Psoas muscle (tissue), 8 donors: ENCODE measurements at regions of chr15 and their contacts with region 1.

Region 1: DNA sequence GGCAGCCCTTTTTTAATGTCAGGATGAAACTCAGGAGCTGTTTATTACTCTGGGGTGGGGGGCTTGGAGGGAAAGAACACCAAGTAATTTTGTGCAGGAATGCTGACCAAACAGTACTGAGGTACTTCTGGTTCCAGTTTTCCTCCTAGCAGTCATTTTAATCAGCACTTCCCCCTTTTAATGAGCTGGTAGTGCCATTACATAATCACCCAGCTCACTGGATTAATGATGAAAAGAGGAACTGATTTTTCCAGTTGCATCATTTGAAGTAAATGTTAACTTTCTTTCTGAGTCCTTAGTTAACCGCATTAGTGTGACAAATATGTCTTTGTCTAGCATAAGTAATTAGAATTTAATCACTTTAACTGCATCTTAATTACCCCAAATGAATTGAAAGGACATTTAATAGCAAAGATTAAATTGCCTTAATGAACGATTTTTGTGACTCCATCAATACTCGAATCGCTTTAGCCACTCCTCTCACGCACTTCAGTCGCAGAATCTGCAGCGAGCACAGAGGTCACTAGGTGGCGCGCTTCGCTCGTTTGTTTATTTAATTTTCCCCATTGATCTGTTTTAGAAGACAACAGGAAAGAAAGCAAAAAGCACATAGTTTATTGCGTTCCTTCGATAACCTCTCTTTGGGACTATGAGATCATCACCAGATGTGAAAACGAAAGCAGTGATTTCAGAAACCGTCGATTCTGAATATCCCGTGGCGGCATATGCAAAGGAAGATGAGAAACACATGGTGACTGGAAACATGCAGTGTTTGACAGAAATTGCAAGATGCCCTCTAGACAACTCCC is 9.8 kb downstream of the ONECUT1 start:
- DNase-seq: peak; percentile 54 to 76
- ATAC-seq: peak in 3 of 4 donors; percentile 55 to 78 (median 57)
- H3K4me3 ChIP-seq: peak overlapping the region; percentile 0
- H3K27ac ChIP-seq: no peak overlapping the region
- H3K4me1 ChIP-seq: peaks cover 18% of the 10 kb centered on the region
- H3K27me3 ChIP-seq: peaks cover 6 to 91% (median 30%) of the 10 kb centered on the region in 3 donors
- CTCF ChIP-seq: peak; percentile 90

Region 2: DNA sequence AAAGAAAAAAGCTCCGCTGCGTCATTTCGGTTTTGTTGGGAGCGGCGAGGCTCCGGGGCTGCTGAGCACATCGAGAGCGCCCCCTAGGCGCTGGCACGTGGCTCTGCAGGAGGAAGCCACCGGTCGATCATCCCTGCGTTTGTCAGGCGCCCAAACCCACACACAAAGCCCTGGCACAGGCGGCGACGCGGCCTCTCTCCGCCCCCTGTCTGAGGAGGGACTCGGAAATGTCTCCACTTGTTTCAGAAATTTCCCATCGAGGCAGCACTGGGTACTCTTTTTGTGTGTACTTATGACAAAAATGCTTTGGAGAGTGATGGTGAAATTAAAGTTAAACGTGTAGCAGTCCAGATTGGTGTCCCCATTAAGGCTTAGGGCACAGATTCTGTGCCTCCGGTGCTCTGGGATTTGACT is 417.1 kb after region 1 on chr15:
- intact Hi-C with region 1: loop called (anchors 5 to 10 kb)
- DNase-seq: peak; percentile 41 to 73
- ATAC-seq: peak; percentile 72 to 92 (median 82)
- H3K4me3 ChIP-seq: peak overlapping the region; percentile 48
- H3K27ac ChIP-seq: no peak overlapping the region
- H3K4me1 ChIP-seq: peaks cover 3% of the 10 kb centered on the region
- H3K27me3 ChIP-seq: no peaks in the 10 kb centered on the region
- CTCF ChIP-seq: peak; percentile 85

Region 3: DNA sequence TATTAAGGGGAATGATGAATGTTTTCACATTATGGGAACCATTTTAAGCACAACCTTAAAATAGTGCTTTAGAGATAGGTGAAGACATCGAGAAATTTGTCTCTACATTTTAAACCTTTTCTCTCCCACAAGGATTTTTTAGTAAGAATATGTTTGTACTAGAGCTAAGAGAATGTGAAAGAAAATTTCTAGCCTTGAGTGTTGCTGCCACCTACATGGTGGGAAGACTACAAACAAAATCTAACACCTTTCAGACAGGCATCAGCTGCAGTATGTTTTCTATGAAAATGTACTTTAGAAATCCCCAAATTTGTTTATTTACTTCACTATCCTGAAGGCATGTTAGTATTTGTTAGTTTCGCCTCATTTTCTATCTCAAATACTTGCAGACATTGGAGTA is 731.7 kb after region 1 on chr15:
- intact Hi-C with region 1: loop called in 1 of 2 experiments (anchors 5 kb)
- DNase-seq: no peak
- ATAC-seq: no peak
- H3K4me3 ChIP-seq: no peak overlapping the region
- H3K27ac ChIP-seq: no peak overlapping the region
- H3K4me1 ChIP-seq: no peaks in the 10 kb centered on the region
- H3K27me3 ChIP-seq: no peaks in the 10 kb centered on the region
- CTCF ChIP-seq: no peak

Region 4: DNA sequence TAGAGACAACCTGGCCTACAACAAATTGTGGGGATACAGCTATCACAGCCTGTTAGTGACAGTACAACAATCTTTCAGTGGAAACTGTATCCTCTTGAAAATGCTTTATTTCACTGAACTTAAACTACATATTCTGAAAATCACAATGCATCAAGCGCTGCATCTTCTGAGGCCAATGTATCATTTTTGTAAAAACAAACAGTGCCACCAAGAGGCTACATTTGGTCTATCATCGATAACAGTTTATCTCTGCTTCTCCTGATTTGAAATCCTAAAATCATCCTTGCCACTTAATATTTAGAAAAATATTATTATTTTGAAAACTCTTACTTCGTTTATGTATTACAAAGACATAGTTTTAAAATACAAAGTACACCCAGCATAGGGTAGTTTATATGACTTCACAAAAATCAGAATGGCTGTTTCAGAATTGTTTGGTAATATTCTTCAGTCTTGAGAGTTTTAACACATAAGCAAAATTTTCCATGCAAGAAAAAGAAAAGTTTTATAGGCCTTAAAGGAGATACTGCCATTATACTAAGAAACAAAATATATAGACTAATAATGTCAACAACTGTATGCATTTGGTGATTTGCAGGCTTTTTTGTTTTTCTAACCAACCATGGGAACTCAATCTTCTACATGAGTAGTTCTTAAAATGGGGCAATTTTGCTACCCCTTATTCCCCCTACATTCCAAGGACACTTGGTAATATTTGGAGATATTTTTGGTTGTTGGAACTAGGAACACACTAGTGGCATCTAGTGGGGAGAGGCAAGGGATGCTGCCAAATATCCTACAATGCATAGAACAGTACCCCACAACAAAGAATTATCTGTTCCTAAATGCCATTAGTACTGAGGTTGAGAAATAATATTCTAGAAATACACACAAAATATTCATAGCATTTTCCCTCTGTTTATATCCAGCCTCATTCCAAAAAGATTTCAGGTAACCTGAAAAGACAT is 936.8 kb after region 1 on chr15:
- intact Hi-C with region 1: loop called (anchors 2 to 5 kb)
- DNase-seq: no peak
- ATAC-seq: no peak
- H3K4me3 ChIP-seq: no peak overlapping the region
- H3K27ac ChIP-seq: no peak overlapping the region
- H3K4me1 ChIP-seq: no peaks in the 10 kb centered on the region
- H3K27me3 ChIP-seq: no peaks in the 10 kb centered on the region
- CTCF ChIP-seq: peak; percentile 34